B cell (primary cell): ENCODE measurements at regions of chr5 and their contacts with region 1.

Region 1: DNA sequence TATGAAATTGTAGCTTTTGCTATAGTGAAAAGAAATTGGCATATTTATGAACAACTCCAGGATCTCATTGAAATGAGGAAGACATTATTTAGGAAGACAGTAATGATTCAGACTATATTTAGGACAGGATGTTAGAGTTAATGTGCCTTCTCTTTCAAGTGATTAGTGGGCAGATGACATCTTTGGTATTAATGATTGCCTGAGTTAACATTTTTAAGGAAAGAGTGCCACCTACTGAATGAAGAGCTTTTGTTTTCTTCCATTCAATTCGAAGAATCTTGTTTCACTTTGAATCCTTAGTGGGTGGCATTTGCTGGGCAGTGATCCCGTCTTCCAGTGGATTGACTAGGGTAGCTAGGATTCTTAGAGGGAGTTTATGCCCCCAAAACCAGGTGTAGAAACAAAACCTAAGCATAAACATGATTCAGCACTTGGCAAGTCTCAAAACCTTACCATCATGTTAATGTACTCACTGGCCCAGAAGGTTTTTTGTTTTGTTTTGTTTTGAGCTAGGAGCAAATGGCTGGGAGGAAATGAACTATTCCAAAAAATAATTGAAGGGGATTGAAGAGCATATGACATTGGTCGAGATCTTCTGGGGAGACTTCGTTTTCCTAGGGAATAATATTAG is 23.2 kb downstream of the MAP3K1 start:
- DNase-seq: peak; percentile 81
- ATAC-seq: peak; percentile 70
- H3K4me3 ChIP-seq: peak overlapping the region in 1 of 5 experiments; percentile 29
- H3K4me3 Mint-ChIP-seq: peak overlapping the region; percentile 47
- H3K27ac ChIP-seq: peak overlapping the region; percentile 48 to 85
- H3K27ac Mint-ChIP-seq: peak overlapping the region; percentile 74
- H3K4me1 ChIP-seq: peaks cover 97% of the 10 kb centered on the region in 2 donors
- H3K4me1 Mint-ChIP-seq: peaks cover 91% of the 10 kb centered on the region
- H3K27me3 ChIP-seq: no peaks in the 10 kb centered on the region
- H3K27me3 Mint-ChIP-seq: no peaks in the 10 kb centered on the region
- CTCF ChIP-seq: peak; percentile 75

Region 2: GRCh38 chr5:56314529-56314928 is 524.0 kb before region 1 on chr5:
- CTCF ChIA-PET with region 1: interaction called, 4 read pairs
- POLR2A ChIA-PET with region 1: no interaction called
- intact Hi-C with region 1: loop called (anchors 5 kb)
- DNase-seq: no peak
- ATAC-seq: no peak
- H3K4me3 ChIP-seq: no peak overlapping the region
- H3K4me3 Mint-ChIP-seq: peak overlapping the region; percentile 9
- H3K27ac ChIP-seq: no peak overlapping the region
- H3K27ac Mint-ChIP-seq: no peak overlapping the region
- H3K4me1 ChIP-seq: peaks cover 37 to 54% of the 10 kb centered on the region in 2 donors
- H3K4me1 Mint-ChIP-seq: peaks cover 56% of the 10 kb centered on the region
- H3K27me3 ChIP-seq: no peaks in the 10 kb centered on the region
- H3K27me3 Mint-ChIP-seq: no peaks in the 10 kb centered on the region
- CTCF ChIP-seq: peak; percentile 67

Region 3: DNA sequence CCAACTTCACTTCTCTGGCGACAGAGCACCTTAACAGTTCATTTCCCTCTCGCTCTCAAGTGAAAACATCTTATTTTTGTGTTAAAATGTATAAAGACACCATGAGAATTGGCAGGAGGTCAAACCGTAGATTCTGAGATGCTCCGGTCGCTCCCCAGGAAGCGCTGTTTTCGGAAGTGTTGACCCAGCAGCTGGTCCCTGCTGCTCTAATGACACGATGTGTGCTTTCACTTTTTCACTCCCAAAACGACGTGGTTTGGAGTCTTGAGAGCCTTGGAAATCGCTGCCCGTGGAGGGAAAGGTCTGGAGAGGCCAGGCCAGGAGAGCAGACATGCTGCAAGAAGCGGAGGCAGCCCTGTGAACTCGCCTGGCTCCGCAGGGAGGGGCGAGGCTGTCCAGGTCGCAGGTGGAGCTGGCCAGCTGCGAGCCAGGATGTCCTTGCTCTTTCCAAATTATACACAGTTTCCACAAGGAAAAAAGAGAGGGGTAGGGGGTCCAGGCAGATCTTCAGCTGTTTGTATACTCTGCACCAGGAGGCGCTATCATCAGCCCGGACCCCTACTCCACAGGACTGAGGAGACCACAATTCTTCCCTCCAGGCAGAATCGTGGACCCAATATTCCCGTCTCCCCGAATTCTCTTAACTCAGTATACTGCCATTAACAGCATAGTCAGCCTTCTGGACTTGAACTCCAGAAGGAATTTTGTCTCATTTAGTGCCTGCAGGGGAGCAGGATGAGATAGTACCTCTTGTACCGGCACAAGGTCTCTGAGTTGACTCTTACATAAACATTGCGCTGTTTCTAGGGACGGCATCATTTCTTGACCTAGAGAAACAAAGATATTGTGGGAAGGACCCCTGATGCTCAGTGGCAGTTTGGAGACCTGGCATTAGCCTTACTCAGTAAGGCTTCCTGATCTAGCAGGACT is 356.8 kb before region 1 on chr5:
- CTCF ChIA-PET with region 1: interaction called, 31 read pairs
- POLR2A ChIA-PET with region 1: no interaction called
- intact Hi-C with region 1: loop called (anchors 1 kb)
- DNase-seq: peak; percentile 72
- ATAC-seq: peak; percentile 18
- H3K4me3 ChIP-seq: peak overlapping the region; percentile 56 to 76 (median 65)
- H3K4me3 Mint-ChIP-seq: peak overlapping the region; percentile 95
- H3K27ac ChIP-seq: peak overlapping the region; percentile 93 to 96
- H3K27ac Mint-ChIP-seq: peak overlapping the region; percentile 97
- H3K4me1 ChIP-seq: peaks cover 42 to 57% of the 10 kb centered on the region in 2 donors
- H3K4me1 Mint-ChIP-seq: peaks cover 41% of the 10 kb centered on the region
- H3K27me3 ChIP-seq: no peaks in the 10 kb centered on the region
- H3K27me3 Mint-ChIP-seq: no peaks in the 10 kb centered on the region
- CTCF ChIP-seq: peak; percentile 52

Region 4: GRCh38 chr5:56686337-56687195 is 152.0 kb before region 1 on chr5:
- CTCF ChIA-PET with region 1: interaction called, 21 read pairs
- POLR2A ChIA-PET with region 1: interaction called, 7 read pairs
- intact Hi-C with region 1: no loop called
- DNase-seq: peak; percentile 82
- ATAC-seq: peak; percentile 78
- H3K4me3 ChIP-seq: peak overlapping the region in 1 of 5 experiments; percentile 33
- H3K4me3 Mint-ChIP-seq: peak overlapping the region; percentile 74
- H3K27ac ChIP-seq: peak overlapping the region; percentile 93 to 97
- H3K27ac Mint-ChIP-seq: peak overlapping the region; percentile 95
- H3K4me1 ChIP-seq: peaks cover 93% of the 10 kb centered on the region in 2 donors
- H3K4me1 Mint-ChIP-seq: peaks cover 94% of the 10 kb centered on the region
- H3K27me3 ChIP-seq: no peaks in the 10 kb centered on the region
- H3K27me3 Mint-ChIP-seq: no peaks in the 10 kb centered on the region
- CTCF ChIP-seq: no peak

Region 5: DNA sequence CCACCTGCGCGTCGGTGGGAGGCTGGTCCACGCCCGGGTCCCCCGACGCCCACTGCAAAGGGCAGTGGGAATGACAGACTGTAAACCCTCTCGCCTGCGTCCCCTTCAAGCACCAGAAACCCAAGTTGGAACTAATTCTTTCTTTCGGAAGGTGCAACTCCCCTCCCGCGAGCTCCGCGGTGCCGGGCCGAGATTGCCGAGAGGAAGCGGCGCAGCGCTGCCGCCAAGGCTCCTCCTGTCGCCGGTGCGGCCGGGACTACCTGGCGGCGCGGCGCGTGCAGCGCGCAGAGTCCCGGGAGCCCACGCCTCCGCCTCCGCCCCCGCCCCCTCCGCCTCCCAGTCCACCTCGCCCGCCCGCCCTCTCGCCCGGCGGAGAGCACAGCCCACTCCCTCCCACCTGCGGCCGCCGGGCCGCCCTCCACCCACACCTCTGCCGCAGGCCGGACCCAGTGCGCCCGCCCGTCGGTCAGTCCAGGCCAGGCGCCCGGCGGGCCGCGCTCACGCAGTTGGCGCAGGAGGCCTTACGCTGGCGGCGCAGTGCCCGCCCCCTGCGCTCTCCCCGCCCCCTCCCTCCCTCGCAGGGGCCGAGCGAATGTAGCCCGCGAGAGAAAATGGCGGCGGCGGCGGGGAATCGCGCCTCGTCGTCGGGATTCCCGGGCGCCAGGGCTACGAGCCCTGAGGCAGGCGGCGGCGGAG is 23.4 kb before region 1 on chr5 and contains the start of gene MAP3K1:
- CTCF ChIA-PET with region 1: interaction called, 16 read pairs
- POLR2A ChIA-PET with region 1: interaction called, 6 read pairs
- intact Hi-C with region 1: loop called (anchors 2 kb)
- DNase-seq: peak; percentile 93
- ATAC-seq: peak; percentile 65
- H3K4me3 ChIP-seq: peak within 1 kb of the TSS; percentile 73 to 97 (median 87)
- H3K4me3 Mint-ChIP-seq: peak within 1 kb of the TSS; percentile 97
- H3K27ac ChIP-seq: peak within 1 kb of the TSS; percentile 91 to 94
- H3K27ac Mint-ChIP-seq: peak within 1 kb of the TSS; percentile 99
- H3K4me1 ChIP-seq: peaks cover 25 to 29% of the 10 kb centered on the region in 2 donors
- H3K4me1 Mint-ChIP-seq: peaks cover 44% of the 10 kb centered on the region
- H3K27me3 ChIP-seq: no peaks in the 10 kb centered on the region
- H3K27me3 Mint-ChIP-seq: no peaks in the 10 kb centered on the region
- CTCF ChIP-seq: no peak
- total RNA-seq, gene MAP3K1: 160 and 164 TPM in 2 replicates

Region 6: DNA sequence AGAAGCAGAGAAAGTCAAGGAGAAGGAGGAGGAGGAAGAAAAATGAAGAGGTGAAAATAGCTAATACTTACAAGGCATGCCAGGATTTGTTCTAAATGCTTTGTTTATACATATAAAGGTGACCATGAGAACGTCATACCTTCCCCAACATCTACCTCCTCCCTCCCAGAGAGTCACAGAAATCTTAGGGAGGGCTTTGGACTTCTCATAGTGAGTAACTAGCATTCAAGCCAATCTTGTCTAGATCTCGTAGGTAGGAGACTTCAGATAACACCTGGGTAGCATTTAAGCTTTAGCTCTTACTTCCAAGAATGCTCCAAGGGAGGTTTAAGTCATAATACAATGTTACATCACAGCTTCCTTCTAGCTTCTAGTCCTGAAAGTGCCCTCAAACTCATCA is 298.9 kb after region 1 on chr5:
- CTCF ChIA-PET with region 1: interaction called, 16 read pairs
- POLR2A ChIA-PET with region 1: interaction called, 3 read pairs
- intact Hi-C with region 1: no loop called
- DNase-seq: no peak
- ATAC-seq: no peak
- H3K4me3 ChIP-seq: no peak overlapping the region
- H3K4me3 Mint-ChIP-seq: no peak overlapping the region
- H3K27ac ChIP-seq: no peak overlapping the region
- H3K27ac Mint-ChIP-seq: no peak overlapping the region
- H3K4me1 ChIP-seq: no peaks in the 10 kb centered on the region
- H3K4me1 Mint-ChIP-seq: no peaks in the 10 kb centered on the region
- H3K27me3 ChIP-seq: no peaks in the 10 kb centered on the region
- H3K27me3 Mint-ChIP-seq: peaks cover 12% of the 10 kb centered on the region
- CTCF ChIP-seq: no peak